Mammary epithelial cell (primary cell): ENCODE measurements at regions of chr17 and their contacts with region 1.

Region 1: GRCh38 chr17:4407851-4408250 is 25.9 kb upstream of the SPNS3 start:
- DNase-seq: no peak
- H3K4me3 ChIP-seq: no peak overlapping the region
- H3K27ac ChIP-seq: no peak overlapping the region
- H3K4me1 ChIP-seq: peaks cover 2% of the 10 kb centered on the region
- H3K27me3 ChIP-seq: no peaks in the 10 kb centered on the region
- CTCF ChIP-seq: no peak

Region 2: GRCh38 chr17:4229627-4230541 is 178.0 kb before region 1 on chr17:
- CTCF ChIA-PET with region 1: no interaction called
- dilution Hi-C with region 1: loop called (anchors 5 kb)
- in situ Hi-C with region 1: no loop called
- intact Hi-C with region 1: no loop called
- DNase-seq: peak; percentile 75
- H3K4me3 ChIP-seq: peak overlapping the region in 2 of 3 experiments; percentile 3 to 9
- H3K27ac ChIP-seq: peak overlapping the region; percentile 28
- H3K4me1 ChIP-seq: peaks cover 45% of the 10 kb centered on the region
- H3K27me3 ChIP-seq: no peaks in the 10 kb centered on the region
- CTCF ChIP-seq: no peak

Region 3: GRCh38 chr17:4329838-4330237 is 78.0 kb before region 1 on chr17:
- CTCF ChIA-PET with region 1: no interaction called
- dilution Hi-C with region 1: loop called (anchors 5 kb)
- in situ Hi-C with region 1: no loop called
- intact Hi-C with region 1: no loop called
- DNase-seq: peak; percentile 96
- H3K4me3 ChIP-seq: no peak overlapping the region
- H3K27ac ChIP-seq: peak overlapping the region; percentile 95
- H3K4me1 ChIP-seq: peaks cover 45% of the 10 kb centered on the region
- H3K27me3 ChIP-seq: no peaks in the 10 kb centered on the region
- CTCF ChIP-seq: no peak

Region 4: DNA sequence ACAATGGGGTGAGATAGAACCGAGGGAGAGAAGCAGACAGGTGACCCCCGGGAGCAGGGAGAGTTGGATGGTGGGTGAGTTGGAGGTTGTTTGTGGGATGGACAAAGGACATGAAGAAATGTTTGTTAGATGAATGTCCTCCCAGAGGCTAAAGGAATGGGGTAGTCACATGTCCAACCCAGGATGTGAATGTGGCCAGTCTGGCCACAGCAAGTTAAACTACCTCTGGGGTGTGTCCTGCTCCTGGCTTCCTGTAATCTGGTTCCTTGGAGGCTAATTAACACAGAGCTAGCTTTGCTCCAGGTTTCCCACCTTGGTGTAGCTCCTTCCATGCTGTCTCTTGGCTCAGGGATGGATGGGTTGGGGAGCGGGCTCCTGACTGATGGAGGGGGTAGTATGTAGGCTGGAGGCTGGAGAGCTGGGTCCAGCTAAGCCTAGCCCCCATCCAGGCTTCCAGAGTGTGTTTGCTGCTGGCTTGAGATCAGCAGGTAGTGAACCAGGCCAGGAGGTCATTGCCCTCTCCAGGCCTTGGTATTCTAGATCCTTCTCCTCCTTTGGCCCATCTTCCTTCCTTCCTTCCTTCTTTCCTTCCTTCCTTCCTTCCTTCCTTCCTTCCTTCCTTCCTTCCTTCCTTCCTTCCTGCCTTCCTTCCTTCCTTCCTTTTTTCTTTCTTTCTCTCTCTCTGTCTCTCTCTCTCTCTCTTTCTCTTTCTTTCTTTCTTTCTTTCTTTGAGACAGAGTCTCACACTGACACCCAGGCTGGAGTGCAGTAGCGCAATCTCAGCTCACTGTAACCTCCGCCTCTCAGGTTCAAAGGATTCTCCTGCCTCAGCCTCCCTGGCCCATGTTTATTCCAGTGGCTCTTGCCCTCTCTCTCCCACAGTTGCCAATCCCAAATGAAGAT is 13.4 kb before region 1 on chr17:
- CTCF ChIA-PET with region 1: no interaction called
- dilution Hi-C with region 1: no loop called
- in situ Hi-C with region 1: no loop called
- intact Hi-C with region 1: loop called (anchors 2 kb)
- DNase-seq: peak; percentile 90
- H3K4me3 ChIP-seq: peak overlapping the region; percentile 7 to 32 (median 20)
- H3K27ac ChIP-seq: peak overlapping the region; percentile 80
- H3K4me1 ChIP-seq: peaks cover 32% of the 10 kb centered on the region
- H3K27me3 ChIP-seq: no peaks in the 10 kb centered on the region
- CTCF ChIP-seq: no peak

Region 5: DNA sequence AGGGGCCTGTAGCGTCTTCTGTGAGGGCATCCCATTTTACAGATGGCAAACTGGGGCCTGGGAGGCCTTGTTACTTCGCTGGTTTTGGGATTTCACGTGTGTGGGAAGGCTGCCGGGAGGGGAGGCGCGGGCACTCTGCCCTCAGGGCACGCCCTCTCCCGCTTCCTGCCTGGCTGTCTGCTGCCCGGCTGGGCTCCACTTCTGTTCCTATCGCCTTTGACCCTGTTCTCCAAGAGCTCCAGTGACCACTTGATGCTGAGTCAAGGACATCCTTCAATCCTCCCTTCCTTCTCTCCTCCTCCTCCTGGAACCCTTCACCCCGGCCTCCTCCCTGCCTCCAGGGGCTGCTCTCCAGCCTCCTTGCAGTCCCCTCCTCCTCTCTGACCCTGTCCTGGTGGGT is 41.9 kb after region 1 on chr17:
- CTCF ChIA-PET with region 1: no interaction called
- dilution Hi-C with region 1: loop called (anchors 5 kb)
- in situ Hi-C with region 1: no loop called
- intact Hi-C with region 1: no loop called
- DNase-seq: no peak
- H3K4me3 ChIP-seq: no peak overlapping the region
- H3K27ac ChIP-seq: no peak overlapping the region
- H3K4me1 ChIP-seq: no peaks in the 10 kb centered on the region
- H3K27me3 ChIP-seq: no peaks in the 10 kb centered on the region
- CTCF ChIP-seq: no peak

Region 6: DNA sequence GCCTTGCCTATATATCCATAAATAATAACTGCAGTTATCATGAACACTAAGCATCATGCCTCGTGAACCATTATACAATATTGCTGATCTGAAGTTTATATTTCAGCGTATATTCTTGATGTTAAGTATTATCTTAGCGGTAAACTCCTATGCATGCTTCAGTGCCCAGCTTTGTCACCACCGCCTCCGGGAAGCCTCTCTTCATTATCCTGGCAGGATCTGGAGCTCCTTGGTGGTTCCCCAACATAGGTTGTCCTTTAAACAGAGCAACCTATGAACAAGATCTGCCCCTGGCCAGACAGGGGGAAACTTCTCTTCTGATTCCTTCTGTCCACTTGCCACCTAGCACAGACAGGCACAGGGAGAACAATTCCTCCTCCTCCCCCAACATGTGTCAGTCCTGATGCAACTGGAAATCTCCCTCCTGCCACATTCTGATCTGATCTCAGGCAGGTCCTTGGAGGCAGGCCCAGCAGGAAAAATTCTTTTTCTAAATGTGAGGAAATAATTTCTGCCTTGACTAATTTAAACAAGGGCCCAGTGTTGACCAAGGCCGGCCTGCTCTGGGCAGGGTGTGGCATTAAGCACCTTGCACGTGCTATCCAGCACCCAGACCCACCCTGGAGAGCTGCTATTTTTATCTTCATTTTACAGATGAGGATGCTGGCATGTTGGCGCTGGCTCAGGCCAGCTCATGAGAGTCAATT is 113.2 kb after region 1 on chr17:
- CTCF ChIA-PET with region 1: no interaction called
- dilution Hi-C with region 1: no loop called
- in situ Hi-C with region 1: no loop called
- intact Hi-C with region 1: no loop called
- DNase-seq: peak; percentile 88
- H3K4me3 ChIP-seq: no peak overlapping the region
- H3K27ac ChIP-seq: peak overlapping the region; percentile 32
- H3K4me1 ChIP-seq: peaks cover 26% of the 10 kb centered on the region
- H3K27me3 ChIP-seq: no peaks in the 10 kb centered on the region
- CTCF ChIP-seq: no peak